ENCODE measurements at regions of chr5 and their contacts with region 1.

Region 1: DNA sequence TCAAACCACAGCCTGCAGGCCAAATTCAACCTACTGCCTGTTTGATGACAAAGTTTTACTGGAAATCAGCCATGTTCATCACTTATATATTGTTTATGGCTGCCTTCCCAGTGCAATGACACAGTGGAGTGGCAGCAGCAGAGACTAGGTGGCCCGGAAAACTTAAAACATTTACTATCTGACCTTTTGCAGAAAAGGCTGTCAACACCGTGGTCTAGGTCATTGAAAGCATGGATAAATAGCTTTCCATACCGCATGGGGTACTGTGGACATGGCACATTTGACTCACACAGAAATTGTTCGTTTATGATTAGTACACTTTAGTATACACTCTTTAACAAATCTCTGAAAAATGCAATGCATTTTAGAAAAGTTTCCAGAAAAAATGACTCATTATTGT is 298.3 kb upstream of the EFNA5 start:
- DNase-seq: peak; percentile 56
- ATAC-seq: peak; percentile 65
- H3K4me3 ChIP-seq: no peak overlapping the region
- H3K27ac ChIP-seq: no peak overlapping the region
- H3K4me1 ChIP-seq: peaks cover 5% of the 10 kb centered on the region; the same call in 1 of the 2 replicates
- H3K27me3 ChIP-seq: no peaks in the 10 kb centered on the region
- CTCF ChIP-seq: no peak
- POLR2A ChIP-seq: no peak
- RAD21 ChIP-seq: no peak

Region 2: DNA sequence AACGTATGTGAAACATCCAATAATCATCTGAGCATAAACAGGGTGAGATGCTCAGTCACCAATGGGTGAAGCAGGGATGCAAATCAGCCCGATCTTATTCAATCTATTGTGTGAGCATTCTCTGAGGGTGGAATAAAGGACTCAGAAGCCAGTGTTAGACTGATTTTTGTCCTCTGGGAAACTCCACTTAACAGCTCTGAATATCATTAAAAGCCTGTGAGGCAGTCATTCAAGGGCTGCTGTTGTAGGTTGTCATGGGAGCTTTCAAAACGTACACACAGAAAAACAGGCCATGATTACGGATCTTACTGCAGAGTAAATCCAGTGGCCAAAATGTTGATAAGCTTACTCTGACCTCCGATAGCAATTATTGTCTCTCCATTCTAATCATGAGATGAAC is 31.8 kb before region 1 on chr5:
- CTCF ChIA-PET with region 1: no interaction called
- POLR2A ChIA-PET with region 1: no interaction called
- dilution Hi-C with region 1: no loop called
- in situ Hi-C with region 1: no loop called
- intact Hi-C with region 1: no loop called
- DNase-seq: no peak
- ATAC-seq: no peak
- H3K4me3 ChIP-seq: no peak overlapping the region
- H3K27ac ChIP-seq: no peak overlapping the region
- H3K4me1 ChIP-seq: no peaks in the 10 kb centered on the region
- H3K27me3 ChIP-seq: no peaks in the 10 kb centered on the region
- CTCF ChIP-seq: no peak
- POLR2A ChIP-seq: no peak
- RAD21 ChIP-seq: no peak

Region 3: DNA sequence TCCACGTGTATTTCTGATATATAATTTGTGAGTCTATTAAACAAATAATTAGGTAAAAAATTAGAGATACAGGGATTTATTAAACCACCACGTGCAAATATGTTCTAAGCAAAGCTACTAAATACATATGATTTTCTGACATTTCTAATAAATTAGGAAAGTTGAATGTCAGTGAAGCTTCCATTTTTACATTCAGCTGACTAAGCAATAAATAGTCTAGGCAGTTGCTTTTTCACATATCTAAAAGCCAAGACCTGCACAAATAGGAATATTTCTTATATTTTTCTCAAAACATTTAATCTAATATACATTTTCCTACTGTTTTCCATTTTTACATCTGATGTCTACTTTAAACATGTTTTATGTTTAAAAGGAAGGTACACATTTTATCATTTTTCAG is 24.3 kb after region 1 on chr5:
- CTCF ChIA-PET with region 1: no interaction called
- POLR2A ChIA-PET with region 1: no interaction called
- dilution Hi-C with region 1: no loop called
- in situ Hi-C with region 1: no loop called
- intact Hi-C with region 1: loop called (anchors 1 kb)
- DNase-seq: no peak
- ATAC-seq: no peak
- H3K4me3 ChIP-seq: no peak overlapping the region
- H3K27ac ChIP-seq: no peak overlapping the region
- H3K4me1 ChIP-seq: peaks cover 4% of the 10 kb centered on the region
- H3K27me3 ChIP-seq: no peaks in the 10 kb centered on the region
- CTCF ChIP-seq: no peak
- POLR2A ChIP-seq: no peak
- RAD21 ChIP-seq: no peak